Caco-2 (cell line): ENCODE measurements at regions of chr11 and their contacts with region 1.

Region 1: GRCh38 chr11:126140932-126141291 is 70.5 kb downstream of the RPUSD4 start:
- DNase-seq: no peak
- H3K4me3 ChIP-seq: no peak overlapping the region
- H3K4me3 Mint-ChIP-seq: no peak overlapping the region
- H3K27ac Mint-ChIP-seq: no peak overlapping the region
- H3K4me1 ChIP-seq: no peaks in the 10 kb centered on the region
- H3K4me1 Mint-ChIP-seq: no peaks in the 10 kb centered on the region
- H3K27me3 ChIP-seq: no peaks in the 10 kb centered on the region
- H3K27me3 Mint-ChIP-seq: no peaks in the 10 kb centered on the region
- CTCF ChIP-seq: no peak

Region 2: GRCh38 chr11:125923012-125923579 is 217.8 kb before region 1 on chr11:
- CTCF ChIA-PET with region 1: no interaction called
- POLR2A ChIA-PET with region 1: no interaction called
- intact Hi-C with region 1: loop called (anchors 5 kb)
- DNase-seq: peak; percentile 79 to 84
- H3K4me3 ChIP-seq: no peak overlapping the region
- H3K4me3 Mint-ChIP-seq: no peak overlapping the region
- H3K27ac Mint-ChIP-seq: no peak overlapping the region
- H3K4me1 ChIP-seq: no peaks in the 10 kb centered on the region
- H3K4me1 Mint-ChIP-seq: no peaks in the 10 kb centered on the region
- H3K27me3 ChIP-seq: 0 out of 2 replicates have a peak, but pooled peaks cover 2% of the 10 kb centered on the region
- H3K27me3 Mint-ChIP-seq: peaks cover 14% of the 10 kb centered on the region
- CTCF ChIP-seq: peak; percentile 95 to 98

Region 3: GRCh38 chr11:126165757-126166156 is 24.8 kb after region 1 on chr11:
- CTCF ChIA-PET with region 1: no interaction called
- POLR2A ChIA-PET with region 1: no interaction called
- intact Hi-C with region 1: no loop called
- DNase-seq: no peak
- H3K4me3 ChIP-seq: no peak overlapping the region
- H3K4me3 Mint-ChIP-seq: no peak overlapping the region
- H3K27ac Mint-ChIP-seq: no peak overlapping the region
- H3K4me1 ChIP-seq: peaks cover under 1% of the 10 kb centered on the region; the same call in 1 of the 2 replicates
- H3K4me1 Mint-ChIP-seq: peaks cover 7% of the 10 kb centered on the region
- H3K27me3 ChIP-seq: no peaks in the 10 kb centered on the region
- H3K27me3 Mint-ChIP-seq: no peaks in the 10 kb centered on the region
- CTCF ChIP-seq: no peak

Region 4: GRCh38 chr11:126186708-126187529 is 46.0 kb after region 1 on chr11:
- CTCF ChIA-PET with region 1: no interaction called
- POLR2A ChIA-PET with region 1: no interaction called
- intact Hi-C with region 1: loop called (anchors 2 kb)
- DNase-seq: no peak
- H3K4me3 ChIP-seq: no peak overlapping the region
- H3K4me3 Mint-ChIP-seq: no peak overlapping the region
- H3K27ac Mint-ChIP-seq: no peak overlapping the region
- H3K4me1 ChIP-seq: 0 out of 2 replicates have a peak, but pooled peaks cover 4% of the 10 kb centered on the region
- H3K4me1 Mint-ChIP-seq: no peaks in the 10 kb centered on the region
- H3K27me3 ChIP-seq: no peaks in the 10 kb centered on the region
- H3K27me3 Mint-ChIP-seq: no peaks in the 10 kb centered on the region
- CTCF ChIP-seq: peak in 1 of 2 experiments; percentile 21